ENCODE measurements at regions of chr7 and their contacts with region 1.

Region 1: DNA sequence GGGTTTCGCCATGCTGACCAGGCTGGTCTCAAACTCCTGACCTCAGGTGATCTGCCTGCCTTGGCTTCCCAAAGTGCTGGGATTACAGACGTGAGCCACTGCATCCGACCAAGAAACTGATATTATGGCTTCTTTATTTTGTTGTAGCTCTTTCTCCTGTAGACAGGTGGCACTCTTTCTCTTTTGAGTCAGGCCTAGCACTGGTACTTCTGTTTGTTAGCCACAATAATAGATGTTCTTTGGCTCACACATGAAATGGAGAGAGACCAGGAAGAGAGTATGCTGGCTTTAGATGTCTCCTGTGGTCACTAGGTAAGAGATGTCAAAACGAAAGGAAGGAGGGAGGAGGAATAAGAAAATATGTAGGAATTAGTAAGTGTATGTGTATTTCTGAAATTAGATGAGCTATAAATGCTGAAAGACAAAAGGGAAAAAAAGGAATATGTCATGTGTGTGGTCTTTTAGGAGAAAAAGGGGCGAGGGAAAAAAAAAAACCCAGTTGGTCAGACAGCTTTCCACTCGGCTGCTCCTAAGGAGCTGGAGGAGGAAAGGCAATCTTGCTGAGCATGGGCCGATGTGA is 78.7 kb downstream of the CLEC2L start:
- DNase-seq: peak; percentile 28
- ATAC-seq: peak; percentile 72
- H3K4me3 Mint-ChIP-seq: no peak overlapping the region
- H3K27ac Mint-ChIP-seq: no peak overlapping the region
- H3K4me1 Mint-ChIP-seq: no peaks in the 10 kb centered on the region
- H3K27me3 Mint-ChIP-seq: no peaks in the 10 kb centered on the region

Region 2: GRCh38 chr7:139471740-139472353 is 130.4 kb before region 1 on chr7:
- CTCF ChIA-PET with region 1: no interaction called
- POLR2A ChIA-PET with region 1: no interaction called
- DNase-seq: no peak
- ATAC-seq: no peak
- H3K4me3 Mint-ChIP-seq: no peak overlapping the region
- H3K27ac Mint-ChIP-seq: no peak overlapping the region
- H3K4me1 Mint-ChIP-seq: no peaks in the 10 kb centered on the region
- H3K27me3 Mint-ChIP-seq: no peaks in the 10 kb centered on the region

Region 3: GRCh38 chr7:139502226-139502625 is 100.0 kb before region 1 on chr7:
- CTCF ChIA-PET with region 1: interaction called, 19 read pairs
- POLR2A ChIA-PET with region 1: no interaction called
- DNase-seq: no peak
- ATAC-seq: no peak
- H3K4me3 Mint-ChIP-seq: no peak overlapping the region
- H3K27ac Mint-ChIP-seq: no peak overlapping the region
- H3K4me1 Mint-ChIP-seq: peaks cover 8% of the 10 kb centered on the region
- H3K27me3 Mint-ChIP-seq: peaks cover 5% of the 10 kb centered on the region

Region 4: DNA sequence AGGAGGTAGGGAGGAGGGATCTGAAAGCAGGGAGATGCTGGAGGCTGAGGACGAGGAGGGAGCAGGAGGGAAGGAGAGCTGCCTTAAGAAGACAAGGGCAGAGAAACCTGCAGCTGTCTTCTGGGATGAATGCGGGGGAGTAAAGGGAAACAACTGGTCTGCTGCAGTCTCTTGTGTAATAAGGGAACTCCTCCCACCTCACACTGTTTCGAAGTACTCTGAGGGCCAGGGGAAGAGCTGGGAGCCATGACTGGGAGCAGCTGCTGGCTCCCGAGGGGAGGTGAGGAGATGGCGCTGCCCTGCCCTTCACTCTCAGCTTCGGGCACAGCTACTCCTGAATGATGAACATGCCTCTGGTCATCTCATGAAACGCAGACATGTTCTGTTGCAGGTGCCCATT is 13.6 kb before region 1 on chr7:
- CTCF ChIA-PET with region 1: interaction called, 24 read pairs
- POLR2A ChIA-PET with region 1: no interaction called
- DNase-seq: no peak
- ATAC-seq: no peak
- H3K4me3 Mint-ChIP-seq: no peak overlapping the region
- H3K27ac Mint-ChIP-seq: no peak overlapping the region
- H3K4me1 Mint-ChIP-seq: peaks cover 11% of the 10 kb centered on the region
- H3K27me3 Mint-ChIP-seq: no peaks in the 10 kb centered on the region

Region 5: DNA sequence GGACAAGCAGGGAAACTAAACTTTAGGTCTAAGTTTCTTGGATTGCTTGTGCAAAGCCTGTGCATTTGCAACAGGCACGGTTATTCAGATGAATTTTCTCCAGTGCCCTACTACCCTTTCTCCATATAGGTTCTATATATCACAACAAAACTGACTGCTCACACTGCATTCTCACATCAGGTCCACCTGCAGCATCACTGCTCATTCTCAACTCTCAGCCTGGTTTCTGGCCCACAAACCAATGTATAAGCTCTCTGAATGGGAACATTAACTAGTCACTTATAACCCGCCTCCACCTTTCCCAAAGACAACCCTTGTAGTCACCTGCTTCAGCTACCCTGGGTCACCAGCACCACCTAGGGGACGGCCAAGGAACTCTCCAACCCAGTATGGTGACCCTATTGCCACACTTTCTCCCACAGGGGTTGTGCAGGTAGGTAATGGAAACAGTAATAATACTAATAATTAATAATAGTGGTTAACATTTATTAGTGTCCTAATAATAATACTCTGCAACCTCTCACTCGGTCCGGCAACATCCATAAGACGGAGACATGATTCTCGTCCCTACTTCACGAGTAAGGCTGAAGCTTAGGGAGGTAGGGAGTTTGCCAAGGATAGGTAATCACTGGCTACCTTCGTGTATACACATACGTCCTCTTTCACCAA is 18.6 kb after region 1 on chr7:
- CTCF ChIA-PET with region 1: interaction called, 34 read pairs
- POLR2A ChIA-PET with region 1: no interaction called
- DNase-seq: peak; percentile 72
- ATAC-seq: peak; percentile 78
- H3K4me3 Mint-ChIP-seq: no peak overlapping the region
- H3K27ac Mint-ChIP-seq: no peak overlapping the region
- H3K4me1 Mint-ChIP-seq: peaks cover 31% of the 10 kb centered on the region
- H3K27me3 Mint-ChIP-seq: no peaks in the 10 kb centered on the region

Region 6: GRCh38 chr7:140003913-140004382 is 401.7 kb after region 1 on chr7:
- CTCF ChIA-PET with region 1: interaction called, 25 read pairs
- POLR2A ChIA-PET with region 1: interaction called, 3 read pairs
- DNase-seq: peak; percentile 49
- ATAC-seq: no peak
- H3K4me3 Mint-ChIP-seq: no peak overlapping the region
- H3K27ac Mint-ChIP-seq: no peak overlapping the region
- H3K4me1 Mint-ChIP-seq: no peaks in the 10 kb centered on the region
- H3K27me3 Mint-ChIP-seq: peaks cover 2% of the 10 kb centered on the region